K562 (cell line): ENCODE measurements at regions of chr12 and their contacts with region 1.

Region 1: DNA sequence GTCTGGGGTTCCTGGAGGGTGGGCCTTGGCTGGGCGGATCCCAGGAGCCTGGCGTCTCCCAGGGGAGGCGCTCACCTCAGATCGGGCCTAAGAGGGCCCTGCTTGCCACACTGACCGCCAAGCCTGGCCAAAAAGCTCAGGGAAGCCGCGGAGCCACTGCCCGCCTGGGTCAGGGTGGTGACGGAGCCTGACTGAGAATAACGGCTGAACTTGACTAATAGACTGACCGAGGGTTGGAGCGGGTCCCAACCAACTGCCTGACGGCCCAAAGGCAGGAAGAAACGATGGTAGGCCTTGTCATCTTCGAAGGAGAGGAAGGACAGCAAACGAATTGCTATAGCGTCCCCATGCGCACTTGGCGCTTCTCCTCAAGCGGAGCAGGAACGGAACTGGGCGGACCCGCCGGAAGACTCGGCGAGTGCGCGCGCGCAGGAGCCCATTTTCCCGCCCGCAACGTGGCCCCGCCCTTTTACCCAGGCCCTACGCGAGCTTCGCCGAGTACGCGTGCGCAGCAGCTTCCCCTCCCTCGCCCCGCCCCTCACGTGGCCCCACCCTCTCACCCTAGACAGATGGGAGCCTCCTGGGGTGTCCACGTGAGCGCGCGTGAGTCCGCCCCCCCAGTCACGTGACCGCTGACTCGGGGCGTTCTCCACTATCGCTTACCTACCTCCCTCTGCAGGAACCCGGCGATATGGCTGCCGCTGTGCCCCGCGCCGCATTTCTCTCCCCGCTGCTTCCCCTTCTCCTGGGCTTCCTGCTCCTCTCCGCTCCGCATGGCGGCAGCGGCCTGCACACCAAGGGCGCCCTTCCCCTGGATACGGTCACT is at the starts of genes ERP29 and TMEM116:
- DNase-seq: peak; percentile 99 to 100 (median 99)
- ATAC-seq: peak; percentile 86
- H3K4me3 ChIP-seq: peak within 1 kb of the TSS; percentile 95
- H3K27ac ChIP-seq: peak within 1 kb of the TSS; percentile 99
- H3K4me1 ChIP-seq: peaks cover 33 to 34% of the 10 kb centered on the region in 2 experiments; a peak in 4 of 5 replicates
- H3K27me3 ChIP-seq: no peaks in the 10 kb centered on the region
- CTCF ChIP-seq: peak; percentile 62 to 74 (median 70); a peak in 5 of 6 replicates
- EP300 ChIP-seq: no peak; the same call in none of the 2 replicates
- POLR2A ChIP-seq: peak; percentile 97
- RAD21 ChIP-seq: peak; percentile 53 to 61
- polyA plus RNA-seq, gene ERP29: 42.4 to 146 TPM
- polyA plus RNA-seq, gene TMEM116: 19.2 to 22.9 TPM

Region 2: GRCh38 chr12:111798182-111798581 is 214.8 kb before region 1 on chr12:
- CTCF ChIA-PET with region 1: no interaction called
- POLR2A ChIA-PET with region 1: no interaction called
- in situ Hi-C with region 1: no loop called
- intact Hi-C with region 1: no loop called
- DNase-seq: no peak
- ATAC-seq: no peak
- H3K4me3 ChIP-seq: no peak overlapping the region
- H3K27ac ChIP-seq: no peak overlapping the region
- H3K4me1 ChIP-seq: no peaks in the 10 kb centered on the region
- H3K27me3 ChIP-seq: no peaks in the 10 kb centered on the region
- CTCF ChIP-seq: no peak
- EP300 ChIP-seq: no peak
- POLR2A ChIP-seq: no peak
- RAD21 ChIP-seq: no peak

Region 3: GRCh38 chr12:111841750-111842555 is 171.0 kb before region 1 on chr12 and contains the start of gene MAPKAPK5:
- CTCF ChIA-PET with region 1: no interaction called
- POLR2A ChIA-PET with region 1: interaction called, 8 read pairs
- in situ Hi-C with region 1: no loop called
- intact Hi-C with region 1: loop called (anchors 5 kb)
- DNase-seq: peak; percentile 95 to 99 (median 97)
- ATAC-seq: peak; percentile 80
- H3K4me3 ChIP-seq: peak within 1 kb of the TSS; percentile 85
- H3K27ac ChIP-seq: peak within 1 kb of the TSS; percentile 98
- H3K4me1 ChIP-seq: peaks cover 23 to 36% of the 10 kb centered on the region in 2 experiments; a peak in 4 of 5 replicates
- H3K27me3 ChIP-seq: no peaks in the 10 kb centered on the region
- CTCF ChIP-seq: no peak
- EP300 ChIP-seq: peak; percentile 43; the same call in 1 of the 2 replicates
- POLR2A ChIP-seq: peak; percentile 83
- RAD21 ChIP-seq: no peak
- polyA plus RNA-seq, gene MAPKAPK5: 11.6 to 17.7 TPM

Region 4: GRCh38 chr12:111975161-111975931 is 37.6 kb before region 1 on chr12:
- CTCF ChIA-PET with region 1: no interaction called
- POLR2A ChIA-PET with region 1: interaction called, 4 read pairs
- in situ Hi-C with region 1: no loop called
- intact Hi-C with region 1: loop called (anchors 5 kb)
- DNase-seq: peak in 3 of 4 experiments; percentile 11 to 73 (median 39)
- ATAC-seq: peak; percentile 83
- H3K4me3 ChIP-seq: no peak overlapping the region
- H3K27ac ChIP-seq: peak overlapping the region; percentile 83
- H3K4me1 ChIP-seq: peaks cover 27 to 32% of the 10 kb centered on the region in 2 experiments
- H3K27me3 ChIP-seq: no peaks in the 10 kb centered on the region
- CTCF ChIP-seq: no peak
- EP300 ChIP-seq: peak; percentile 15; the same call in 1 of the 2 replicates
- POLR2A ChIP-seq: no peak
- RAD21 ChIP-seq: no peak

Region 5: DNA sequence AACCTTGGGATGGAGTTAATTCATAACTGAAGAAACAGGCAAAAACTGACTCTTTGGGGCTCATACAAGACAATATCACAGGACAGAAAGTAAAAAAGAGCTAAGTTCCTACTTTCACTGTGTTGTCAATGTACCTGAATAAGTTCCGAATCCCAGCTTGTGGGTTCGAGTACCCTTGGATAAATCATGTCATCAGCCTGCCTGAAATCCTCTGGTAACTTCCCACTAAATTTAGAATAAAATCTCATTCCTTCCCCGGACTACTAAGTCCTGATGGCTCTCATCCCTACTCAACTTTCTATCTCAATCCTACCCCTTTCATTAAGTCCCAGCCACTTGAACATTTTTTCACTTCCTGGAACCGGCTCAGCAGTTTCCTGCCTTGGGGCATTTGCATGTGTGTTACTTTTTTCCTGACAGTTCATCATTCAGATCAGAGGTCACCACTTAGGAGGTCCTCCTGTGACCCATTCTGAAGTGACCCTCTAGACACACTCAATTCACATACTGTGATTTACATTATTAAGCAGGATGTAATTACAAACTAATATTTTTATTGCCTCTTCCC is 12.9 kb after region 1 on chr12:
- CTCF ChIA-PET with region 1: no interaction called
- POLR2A ChIA-PET with region 1: interaction called, 54 read pairs
- in situ Hi-C with region 1: no loop called
- intact Hi-C with region 1: no loop called
- DNase-seq: no peak
- ATAC-seq: no peak
- H3K4me3 ChIP-seq: no peak overlapping the region
- H3K27ac ChIP-seq: no peak overlapping the region
- H3K4me1 ChIP-seq: no peaks in the 10 kb centered on the region
- H3K27me3 ChIP-seq: no peaks in the 10 kb centered on the region
- CTCF ChIP-seq: no peak
- EP300 ChIP-seq: no peak
- POLR2A ChIP-seq: peak; percentile 48
- RAD21 ChIP-seq: no peak

Region 6: DNA sequence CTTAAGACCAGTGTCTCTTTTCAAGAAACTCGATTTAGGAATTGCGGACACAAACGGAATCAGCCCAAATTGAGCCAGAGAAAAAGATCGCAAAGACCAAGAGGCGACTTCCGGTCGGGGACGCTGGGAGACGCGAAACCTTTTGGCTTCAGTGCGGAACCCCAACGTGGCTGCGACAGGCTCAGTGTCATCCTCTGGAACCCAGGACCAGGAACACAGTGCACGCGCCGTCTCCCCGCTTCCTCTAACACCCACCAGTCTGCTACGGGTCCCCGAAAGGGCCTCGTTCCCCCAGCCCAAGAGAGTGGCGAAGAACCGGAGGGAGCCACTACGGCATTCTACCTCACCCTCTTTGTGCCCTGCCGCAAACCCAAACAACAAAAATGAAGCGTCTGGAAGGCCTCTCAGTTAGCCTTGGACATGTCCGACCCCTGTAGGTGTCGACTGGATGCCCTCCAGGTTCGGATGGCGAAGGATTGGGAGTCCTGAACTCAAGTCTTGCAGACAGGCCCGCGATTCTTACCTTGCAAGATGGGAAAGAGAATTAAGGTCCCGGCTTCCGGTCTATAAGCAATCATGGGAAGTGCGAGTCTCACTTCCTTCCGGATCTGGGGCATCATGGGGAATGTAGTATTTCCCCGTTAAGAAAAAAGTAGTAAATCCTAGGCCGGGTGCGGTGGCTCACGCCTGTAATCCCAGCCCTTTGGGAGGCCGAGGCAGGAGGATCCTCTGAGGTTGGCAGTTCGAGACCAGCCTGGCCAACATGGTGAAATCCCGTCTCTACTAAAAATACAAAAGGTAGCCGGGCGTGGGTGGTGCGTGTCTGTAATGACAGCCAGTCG is 396.3 kb after region 1 on chr12 and contains the start of gene RPL6:
- CTCF ChIA-PET with region 1: no interaction called
- POLR2A ChIA-PET with region 1: no interaction called
- in situ Hi-C with region 1: no loop called
- intact Hi-C with region 1: loop called (anchors 2 kb)
- DNase-seq: peak; percentile 78 to 95 (median 84)
- ATAC-seq: peak; percentile 90
- H3K4me3 ChIP-seq: peak within 1 kb of the TSS; percentile 90
- H3K27ac ChIP-seq: peak within 1 kb of the TSS; percentile 96
- H3K4me1 ChIP-seq: peaks cover 7 to 16% of the 10 kb centered on the region in 2 experiments; a peak in 4 of 5 replicates
- H3K27me3 ChIP-seq: no peaks in the 10 kb centered on the region
- CTCF ChIP-seq: no peak
- EP300 ChIP-seq: peak; percentile 17; the same call in 1 of the 2 replicates
- POLR2A ChIP-seq: peak; percentile 99
- RAD21 ChIP-seq: no peak
- polyA plus RNA-seq, gene RPL6: 1,519 to 1,617 TPM